Ascending aorta (tissue), 2 donors: ENCODE measurements at regions of chr12 and their contacts with region 1.

Region 1: DNA sequence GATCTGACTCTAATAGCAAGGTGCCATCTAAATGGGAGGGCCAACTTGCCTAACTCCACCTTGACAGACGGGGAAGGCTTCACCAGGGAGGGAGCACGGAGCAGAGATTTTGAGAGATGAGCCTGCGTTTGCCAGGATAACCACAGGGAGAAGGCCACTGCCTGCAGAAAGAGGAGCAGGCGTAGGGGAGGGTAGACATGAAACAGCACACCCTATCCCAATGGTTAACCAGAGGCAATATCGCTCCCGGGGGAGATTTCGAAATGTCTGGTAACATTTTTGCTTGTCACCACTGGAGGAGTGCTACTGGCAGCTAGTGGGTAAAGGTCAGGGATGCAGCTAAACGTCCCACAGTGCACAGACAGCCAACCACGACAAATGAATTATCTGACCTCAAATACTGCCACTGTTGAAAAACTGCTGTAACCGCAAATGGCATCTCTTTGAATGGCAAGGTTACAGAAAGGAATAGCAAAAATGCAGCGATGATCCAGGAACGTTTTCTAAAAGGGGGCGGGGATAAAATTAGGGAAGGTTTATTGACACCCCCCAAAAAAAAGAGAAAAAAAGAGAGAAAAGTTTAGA is 126.0 kb upstream of the ATF7IP start:
- DNase-seq: no peak
- H3K4me3 ChIP-seq: peak overlapping the region; percentile 4 to 39
- H3K27ac ChIP-seq: no peak overlapping the region
- H3K4me1 ChIP-seq: peaks cover 0 to 2% of the 10 kb centered on the region in 2 donors
- H3K27me3 ChIP-seq: no peaks in the 10 kb centered on the region
- CTCF ChIP-seq: no peak

Region 2: DNA sequence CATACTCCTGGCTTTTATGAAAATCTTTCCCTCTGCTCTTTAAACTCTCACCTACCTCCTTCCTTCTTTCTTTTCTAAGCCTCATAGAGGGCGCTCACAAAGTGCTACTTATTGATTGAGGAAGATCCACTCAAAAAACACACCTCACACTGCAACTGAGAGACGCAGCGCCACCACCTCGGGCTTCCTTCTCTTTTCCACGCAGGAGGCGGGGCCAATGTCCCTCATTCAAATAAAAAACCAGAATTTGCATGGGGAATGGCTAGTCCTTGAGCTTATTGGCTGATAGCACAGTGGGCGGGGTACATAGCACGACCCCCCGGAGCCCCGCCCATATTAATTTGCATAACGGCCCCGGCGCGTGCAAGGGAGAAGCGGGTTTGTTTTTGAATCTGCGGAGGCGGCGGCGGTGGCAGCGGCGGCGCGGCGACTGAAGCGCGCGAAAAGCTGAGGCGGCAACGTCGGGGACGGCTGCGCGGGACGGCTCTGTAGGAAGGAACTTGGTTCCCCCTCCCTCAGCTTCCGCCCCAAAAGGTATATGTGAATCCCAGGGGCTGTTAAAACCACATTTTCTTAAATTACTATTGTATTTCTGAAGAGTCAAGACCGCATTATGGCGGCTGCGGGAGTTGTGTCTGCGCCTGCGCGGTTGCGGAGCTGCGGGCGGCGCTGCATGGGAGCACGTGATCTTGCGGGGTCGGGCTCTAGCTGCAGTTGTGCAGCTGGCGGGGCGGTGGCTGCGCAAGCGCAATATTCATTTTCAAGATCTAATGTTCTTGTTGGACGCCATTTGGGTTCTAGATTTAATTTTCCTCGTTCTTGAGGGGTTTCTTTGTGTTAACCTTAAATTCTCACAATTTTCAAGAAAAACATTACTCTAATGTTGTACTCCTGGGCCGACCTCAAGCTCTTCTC is 126.1 kb after region 1 on chr12 and contains the start of gene ATF7IP:
- intact Hi-C with region 1: loop called (anchors 1 kb)
- DNase-seq: peak; percentile 93 to 98
- H3K4me3 ChIP-seq: peak within 1 kb of the TSS; percentile 73 to 84
- H3K27ac ChIP-seq: peak within 1 kb of the TSS; percentile 96 to 98
- H3K4me1 ChIP-seq: peaks cover 0 to 5% of the 10 kb centered on the region in 2 donors
- H3K27me3 ChIP-seq: no peaks in the 10 kb centered on the region
- CTCF ChIP-seq: peak in 1 of 3 experiments; percentile 18
- total RNA-seq, gene ATF7IP: 58.2 TPM

Region 3: DNA sequence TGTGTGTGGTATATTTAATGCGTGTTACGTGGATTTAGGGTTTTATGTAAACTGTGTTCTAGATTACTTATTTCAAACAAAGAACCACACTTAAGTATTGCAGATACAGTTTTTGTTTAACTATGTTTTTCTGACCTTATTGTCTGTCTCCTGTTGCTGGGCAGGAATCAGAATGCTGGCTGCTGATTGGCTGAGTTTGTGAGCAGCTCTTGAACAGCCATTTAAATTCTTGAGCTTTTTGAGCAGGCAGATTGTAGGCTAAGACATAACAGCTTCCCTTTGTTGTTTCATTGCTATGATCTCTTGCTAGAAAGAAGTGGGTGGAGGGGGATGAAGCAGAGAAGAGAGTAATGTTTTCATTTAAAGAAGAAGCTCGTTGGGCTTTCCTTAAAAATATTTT is 178.3 kb after region 1 on chr12:
- intact Hi-C with region 1: loop called (anchors 5 kb)
- DNase-seq: peak; percentile 24 to 72
- H3K4me3 ChIP-seq: no peak overlapping the region
- H3K27ac ChIP-seq: no peak overlapping the region
- H3K4me1 ChIP-seq: peaks cover 0 to 7% of the 10 kb centered on the region in 2 donors
- H3K27me3 ChIP-seq: no peaks in the 10 kb centered on the region
- CTCF ChIP-seq: no peak

Region 4: GRCh38 chr12:14664510-14664909 is 425.1 kb after region 1 on chr12:
- intact Hi-C with region 1: loop called (anchors 5 kb)
- DNase-seq: no peak
- H3K4me3 ChIP-seq: no peak overlapping the region
- H3K27ac ChIP-seq: no peak overlapping the region
- H3K4me1 ChIP-seq: no peaks in the 10 kb centered on the region
- H3K27me3 ChIP-seq: no peaks in the 10 kb centered on the region
- CTCF ChIP-seq: peak; percentile 64 to 85 (median 83)